ENCODE measurements at regions of chr20 and their contacts with region 1.

Region 1: GRCh38 chr20:30376767-30377666 is 880.4 kb upstream of the DEFB115 start:
- DNase-seq: peak; percentile 97
- H3K4me3 Mint-ChIP-seq: peak overlapping the region; percentile 97
- H3K27ac Mint-ChIP-seq: peak overlapping the region; percentile 96
- H3K4me1 Mint-ChIP-seq: peaks cover 24% of the 10 kb centered on the region
- H3K27me3 Mint-ChIP-seq: no peaks in the 10 kb centered on the region

Region 2: DNA sequence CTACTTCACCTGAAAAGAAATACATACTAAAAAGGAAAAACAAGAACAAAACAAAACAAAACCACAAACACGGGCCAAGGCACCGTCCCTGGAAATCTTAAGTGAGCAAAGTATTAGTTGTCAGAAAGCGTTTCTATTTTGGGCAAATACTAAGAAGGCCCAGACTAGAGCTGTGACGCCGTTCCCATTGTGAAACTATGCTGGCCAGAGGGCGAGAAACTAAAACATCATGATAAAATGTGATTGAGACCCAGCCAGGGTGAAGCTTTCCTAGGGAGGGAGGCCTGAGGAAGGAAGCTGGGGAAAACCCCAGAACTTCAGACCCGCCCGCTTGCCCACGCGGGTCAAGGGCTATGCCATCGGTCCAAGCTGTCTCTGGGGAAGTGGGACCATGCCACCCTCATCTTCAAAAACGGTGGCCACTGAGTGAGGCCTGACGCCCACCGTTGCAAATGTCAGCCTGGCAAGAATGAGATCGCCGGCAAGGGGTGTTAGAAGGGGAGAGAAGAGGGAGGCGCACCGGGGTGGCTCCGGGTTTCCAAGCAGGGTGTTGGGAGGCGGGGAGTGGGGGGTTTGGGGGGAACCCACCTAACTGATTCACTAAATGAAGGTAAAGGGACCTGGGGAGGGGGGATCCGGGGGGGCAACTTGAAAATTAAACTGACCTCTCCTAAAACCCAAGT is 1070.5 kb before region 1 on chr20:
- intact Hi-C with region 1: loop called (anchors 5 kb)
- DNase-seq: peak; percentile 82
- H3K4me3 Mint-ChIP-seq: peak overlapping the region; percentile 72
- H3K27ac Mint-ChIP-seq: peak overlapping the region; percentile 96
- H3K4me1 Mint-ChIP-seq: peaks cover 35% of the 10 kb centered on the region
- H3K27me3 Mint-ChIP-seq: no peaks in the 10 kb centered on the region

Region 3: GRCh38 chr20:30419466-30419865 is 42.4 kb after region 1 on chr20:
- intact Hi-C with region 1: no loop called
- DNase-seq: no peak
- H3K4me3 Mint-ChIP-seq: no peak overlapping the region
- H3K27ac Mint-ChIP-seq: no peak overlapping the region
- H3K4me1 Mint-ChIP-seq: no peaks in the 10 kb centered on the region
- H3K27me3 Mint-ChIP-seq: no peaks in the 10 kb centered on the region

Region 4: GRCh38 chr20:31381766-31382165 is 1004.7 kb after region 1 on chr20:
- intact Hi-C with region 1: no loop called
- DNase-seq: no peak
- H3K4me3 Mint-ChIP-seq: no peak overlapping the region
- H3K27ac Mint-ChIP-seq: no peak overlapping the region
- H3K4me1 Mint-ChIP-seq: no peaks in the 10 kb centered on the region
- H3K27me3 Mint-ChIP-seq: no peaks in the 10 kb centered on the region

Measured in activated CD4-positive, alpha-beta T cell treated with anti-CD3 and anti-CD28 coated beads, Interleukin-2, amount 10 ng/mL, durations not matched to agents 24 days and 14 days (primary cell).